ENCODE measurements at regions of chr17 and their contacts with region 1.

Region 1: GRCh38 chr17:59004338-59005111 is 102.2 kb downstream of the TRIM37 start:
- DNase-seq: peak; percentile 21
- H3K4me3 ChIP-seq: no peak overlapping the region
- H3K27ac ChIP-seq: no peak overlapping the region
- H3K4me1 ChIP-seq: peaks cover 19% of the 10 kb centered on the region
- H3K27me3 ChIP-seq: no peaks in the 10 kb centered on the region
- CTCF ChIP-seq: peak; percentile 98

Region 2: DNA sequence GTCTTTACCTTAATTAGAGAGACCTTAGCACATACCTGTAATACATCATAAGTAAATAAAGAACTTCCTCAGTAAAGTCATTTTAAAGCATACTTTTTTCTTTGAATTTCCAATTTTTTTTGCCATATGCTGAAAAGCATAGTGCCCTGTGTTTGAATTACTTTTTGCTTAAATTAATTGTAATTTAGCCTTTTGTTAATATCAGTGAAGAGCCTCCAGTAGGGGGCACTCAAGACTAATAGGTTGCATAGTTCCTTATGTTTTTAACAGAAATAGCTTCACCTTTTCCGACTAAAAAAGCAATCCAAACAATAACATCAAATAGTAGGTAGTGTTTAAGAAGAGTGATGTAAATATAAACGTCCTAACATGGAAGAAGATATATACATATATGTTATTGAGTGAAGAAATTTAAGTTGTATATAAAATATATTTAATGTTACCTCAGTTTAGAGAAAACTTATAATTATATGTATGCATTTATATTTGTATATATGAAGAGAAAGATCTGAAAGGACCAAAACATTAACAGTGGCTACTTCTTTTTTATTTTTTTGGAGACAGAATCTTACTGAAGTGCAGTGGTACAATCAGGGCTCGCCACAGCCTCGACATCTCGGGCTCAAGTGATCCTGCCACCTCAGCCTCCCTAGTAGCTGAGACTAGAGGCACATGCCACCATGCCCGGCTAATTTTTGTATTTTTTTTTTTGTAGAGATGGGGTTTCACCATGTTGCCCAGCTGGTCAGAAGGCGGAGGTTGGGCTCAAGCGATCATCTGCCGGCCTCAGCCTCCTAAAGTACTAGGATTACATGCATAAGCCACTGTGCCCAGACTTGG is 293.4 kb before region 1 on chr17:
- intact Hi-C with region 1: loop called (anchors 5 kb)
- DNase-seq: no peak
- H3K4me3 ChIP-seq: no peak overlapping the region
- H3K27ac ChIP-seq: no peak overlapping the region
- H3K4me1 ChIP-seq: no peaks in the 10 kb centered on the region
- H3K27me3 ChIP-seq: no peaks in the 10 kb centered on the region
- CTCF ChIP-seq: peak; percentile 80

Measured in left ventricle myocardium inferior (tissue), 1 donor.